ENCODE measurements at regions of chr11 and their contacts with region 1.

Region 1: DNA sequence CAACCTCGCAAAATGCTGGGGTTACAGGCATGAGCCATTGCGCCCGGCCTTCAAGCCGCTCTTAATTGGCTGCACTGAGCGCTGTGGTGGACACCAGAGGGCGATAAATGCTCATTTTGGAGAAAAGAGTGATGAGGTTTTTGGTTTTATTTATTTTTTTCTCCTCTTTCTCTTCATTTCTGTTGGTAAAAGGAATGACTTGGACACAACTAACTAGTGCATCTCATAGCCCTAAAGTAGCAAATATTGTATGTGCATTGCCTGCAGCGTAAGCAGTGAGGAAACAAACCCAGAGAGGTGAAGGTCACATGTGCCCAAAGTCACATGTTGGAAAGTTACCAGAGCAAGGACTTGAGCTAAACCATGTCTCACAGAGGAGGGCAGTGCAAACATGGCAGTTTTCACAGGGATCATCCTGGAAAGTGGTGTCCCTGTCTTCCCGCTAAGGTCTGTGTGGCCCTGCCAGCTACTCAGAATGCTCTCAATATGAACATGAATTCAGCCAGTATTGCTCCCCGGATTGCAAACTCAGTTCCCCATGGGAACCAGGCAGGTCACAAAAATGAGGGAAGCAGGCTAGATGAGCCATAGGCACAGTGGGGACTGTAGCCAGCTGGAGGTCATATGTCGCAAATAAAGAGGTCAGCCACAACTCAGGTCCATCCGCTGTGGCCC is 8.6 kb upstream of the CD82 start:
- DNase-seq: peak; percentile 82
- H3K4me3 ChIP-seq: no peak overlapping the region
- H3K27ac ChIP-seq: no peak overlapping the region
- H3K4me1 ChIP-seq: peaks cover 5% of the 10 kb centered on the region
- H3K27me3 ChIP-seq: no peaks in the 10 kb centered on the region
- CTCF ChIP-seq: peak; percentile 92

Region 2: DNA sequence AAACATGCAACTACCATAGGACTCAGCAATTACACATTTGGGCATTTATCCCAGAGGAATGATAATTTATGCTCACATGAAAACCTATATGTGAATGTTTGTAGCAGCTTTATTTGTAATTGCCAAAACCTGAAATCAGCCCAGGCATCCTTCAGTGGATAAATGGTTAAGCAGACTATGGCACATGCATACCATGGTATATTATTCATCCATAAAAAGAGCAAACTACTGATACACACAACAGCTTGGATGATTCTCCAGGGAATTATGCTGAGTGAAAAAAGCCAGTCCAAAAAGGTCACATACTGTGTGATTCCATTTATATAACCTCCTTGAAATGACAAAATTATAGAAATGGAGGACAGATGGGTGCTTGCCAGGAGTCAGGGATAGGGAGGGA is 333.6 kb before region 1 on chr11:
- CTCF ChIA-PET with region 1: no interaction called
- POLR2A ChIA-PET with region 1: interaction called, 14 read pairs
- intact Hi-C with region 1: no loop called
- DNase-seq: peak; percentile 38
- H3K4me3 ChIP-seq: no peak overlapping the region
- H3K27ac ChIP-seq: no peak overlapping the region
- H3K4me1 ChIP-seq: peaks cover 7% of the 10 kb centered on the region
- H3K27me3 ChIP-seq: no peaks in the 10 kb centered on the region
- CTCF ChIP-seq: no peak

Region 3: DNA sequence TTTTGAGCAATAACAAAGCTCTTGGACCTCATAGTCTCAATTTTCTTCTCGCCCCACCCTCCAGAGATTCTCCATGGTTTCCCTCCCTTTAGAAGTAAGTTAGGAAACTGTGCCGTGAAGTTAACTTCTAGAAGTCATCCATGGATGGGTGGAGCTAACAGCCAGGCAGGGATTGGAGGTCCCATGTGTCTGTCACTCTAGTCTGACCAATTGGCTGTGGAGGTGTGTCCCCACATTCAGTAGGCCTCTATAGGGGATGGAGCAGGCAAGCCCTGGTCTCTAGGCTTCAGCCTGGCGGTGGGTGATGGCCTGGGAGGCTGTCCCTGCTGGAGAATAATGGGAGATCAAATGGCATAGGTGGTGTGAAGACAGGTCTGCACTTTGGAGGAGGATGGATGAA is 343.1 kb after region 1 on chr11:
- CTCF ChIA-PET with region 1: interaction called, 7 read pairs
- POLR2A ChIA-PET with region 1: no interaction called
- intact Hi-C with region 1: loop called (anchors 5 kb)
- DNase-seq: peak; percentile 92
- H3K4me3 ChIP-seq: no peak overlapping the region
- H3K27ac ChIP-seq: no peak overlapping the region
- H3K4me1 ChIP-seq: no peaks in the 10 kb centered on the region
- H3K27me3 ChIP-seq: no peaks in the 10 kb centered on the region
- CTCF ChIP-seq: no peak

Measured in A673 (cell line).